ENCODE measurements at regions of chr6 and their contacts with region 1.

Region 1: DNA sequence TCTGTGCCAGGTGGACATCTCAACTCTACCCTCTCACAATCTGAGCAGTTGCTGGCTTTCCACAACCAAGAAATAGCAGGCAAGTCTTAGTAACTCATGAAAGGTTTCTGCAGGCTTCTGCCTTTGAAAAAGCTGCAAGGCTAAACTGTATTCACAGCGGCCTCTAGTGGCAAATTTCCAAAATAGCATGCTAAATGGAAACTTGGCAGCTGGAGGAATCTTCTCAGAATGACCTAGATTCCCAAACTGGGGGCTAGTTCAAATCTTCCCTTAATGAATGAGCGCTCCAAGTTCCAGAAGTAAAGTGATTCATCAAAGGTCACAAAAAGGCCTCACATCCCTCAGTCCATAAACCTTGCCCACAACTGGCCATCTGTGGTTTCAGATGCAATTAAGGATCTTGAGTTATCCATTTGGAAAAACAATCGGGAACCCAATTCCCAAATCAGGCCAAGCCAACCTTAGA is 11.9 kb upstream of the CPNE5 start:
- DNase-seq: peak in 4 of 5 donors; percentile 37 to 49 (median 46)
- H3K4me3 ChIP-seq: no peak overlapping the region
- H3K4me3 Mint-ChIP-seq: no peak overlapping the region
- H3K27ac ChIP-seq: no peak overlapping the region
- H3K27ac Mint-ChIP-seq: no peak overlapping the region
- H3K4me1 ChIP-seq: no peaks in the 10 kb centered on the region
- H3K4me1 Mint-ChIP-seq: no peaks in the 10 kb centered on the region
- H3K27me3 ChIP-seq: no peaks in the 10 kb centered on the region
- H3K27me3 Mint-ChIP-seq: no peaks in the 10 kb centered on the region

Region 2: DNA sequence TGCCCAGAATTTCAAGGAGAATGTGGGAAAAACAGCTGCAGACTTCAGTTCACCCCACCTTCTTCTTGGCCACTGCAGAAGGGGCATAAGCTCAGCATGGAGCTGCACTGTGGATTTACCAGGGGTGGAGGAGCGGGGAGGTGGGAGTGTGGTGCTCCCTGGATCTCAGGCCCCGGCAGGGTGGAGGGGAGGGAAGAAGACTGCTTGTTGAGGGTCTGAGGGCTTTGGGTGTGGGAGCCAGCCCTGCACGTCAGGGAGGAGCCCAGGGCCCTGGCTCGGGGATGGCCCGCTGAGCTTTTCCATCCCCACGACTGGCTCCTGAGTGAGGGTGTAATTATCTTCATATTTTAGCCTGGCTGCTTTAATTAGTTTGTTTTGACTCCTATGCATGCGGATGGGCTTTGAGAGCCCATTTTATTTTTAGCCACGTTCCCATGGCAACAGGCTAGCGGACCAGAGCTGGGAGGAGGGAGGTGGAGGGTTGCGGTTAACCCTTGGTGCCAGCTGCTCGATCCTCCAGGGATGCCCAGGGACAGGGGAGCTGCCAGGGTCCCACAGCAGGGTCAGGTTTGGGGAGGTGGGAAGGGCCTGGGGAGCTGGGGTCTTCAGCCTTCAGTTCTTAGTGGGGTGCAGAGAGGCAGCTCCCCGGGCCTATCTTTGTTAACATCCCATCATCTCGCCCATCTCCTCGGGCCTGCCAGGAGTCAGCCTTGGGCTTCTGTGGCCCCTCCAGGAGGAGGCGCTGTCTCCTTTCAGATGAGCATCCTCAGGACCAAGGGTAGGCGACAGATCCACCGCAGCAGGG is 85.4 kb before region 1 on chr6:
- CTCF ChIA-PET with region 1: interaction called, 47 read pairs
- POLR2A ChIA-PET with region 1: no interaction called
- intact Hi-C with region 1: loop called (anchors 1 kb)
- DNase-seq: peak; percentile 75 to 80 (median 78)
- H3K4me3 ChIP-seq: no peak overlapping the region
- H3K4me3 Mint-ChIP-seq: peak overlapping the region in 2 of 8 donors; percentile 11 to 28
- H3K27ac ChIP-seq: no peak overlapping the region
- H3K27ac Mint-ChIP-seq: peak overlapping the region in 5 of 7 donors; percentile 11 to 66 (median 50)
- H3K4me1 ChIP-seq: peaks cover 45% of the 10 kb centered on the region
- H3K4me1 Mint-ChIP-seq: peaks cover 27 to 37% (median 31%) of the 10 kb centered on the region in 4 donors
- H3K27me3 ChIP-seq: no peaks in the 10 kb centered on the region
- H3K27me3 Mint-ChIP-seq: no peaks in the 10 kb centered on the region

Region 3: DNA sequence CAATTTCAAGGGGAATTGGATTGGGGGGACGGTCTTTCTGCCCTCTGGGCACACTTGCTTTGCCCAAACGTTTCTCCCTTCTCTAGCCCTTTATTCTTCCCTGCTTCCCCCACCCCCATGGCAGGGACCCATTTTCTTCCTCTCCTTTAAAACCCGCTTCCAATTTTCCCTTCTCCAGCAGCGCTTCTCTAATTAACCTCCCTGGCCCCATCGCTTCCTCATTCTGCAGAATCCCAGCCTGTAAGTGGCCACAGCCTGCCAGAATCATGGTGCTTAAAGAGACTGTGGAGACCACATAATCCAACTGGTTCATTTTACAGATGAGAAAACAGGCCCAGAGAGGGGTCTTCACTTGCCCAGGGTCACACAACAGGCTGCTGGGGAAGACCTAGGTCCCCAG is 73.4 kb before region 1 on chr6:
- CTCF ChIA-PET with region 1: no interaction called
- POLR2A ChIA-PET with region 1: no interaction called
- intact Hi-C with region 1: no loop called
- DNase-seq: no peak
- H3K4me3 ChIP-seq: no peak overlapping the region
- H3K4me3 Mint-ChIP-seq: no peak overlapping the region
- H3K27ac ChIP-seq: no peak overlapping the region
- H3K27ac Mint-ChIP-seq: peak overlapping the region in 1 of 7 donors; percentile 40
- H3K4me1 ChIP-seq: no peaks in the 10 kb centered on the region
- H3K4me1 Mint-ChIP-seq: peaks cover 0 to 6% (median 3%) of the 10 kb centered on the region in 4 donors
- H3K27me3 ChIP-seq: no peaks in the 10 kb centered on the region
- H3K27me3 Mint-ChIP-seq: no peaks in the 10 kb centered on the region

Region 4: GRCh38 chr6:36840432-36841403 is 10.5 kb before region 1 on chr6:
- CTCF ChIA-PET with region 1: interaction called, 13 read pairs
- POLR2A ChIA-PET with region 1: no interaction called
- intact Hi-C with region 1: no loop called
- DNase-seq: peak; percentile 8 to 59 (median 25)
- H3K4me3 ChIP-seq: peak overlapping the region in 1 of 2 donors; percentile 19
- H3K4me3 Mint-ChIP-seq: peak overlapping the region; percentile 55 to 84 (median 81)
- H3K27ac ChIP-seq: no peak overlapping the region
- H3K27ac Mint-ChIP-seq: peak overlapping the region in 2 of 7 donors; percentile 25 to 63
- H3K4me1 ChIP-seq: peaks cover 20% of the 10 kb centered on the region
- H3K4me1 Mint-ChIP-seq: peaks cover 3 to 15% (median 9%) of the 10 kb centered on the region in 4 donors
- H3K27me3 ChIP-seq: peaks cover 18% of the 10 kb centered on the region
- H3K27me3 Mint-ChIP-seq: peaks cover 4 to 19% of the 10 kb centered on the region in 2 donors

Region 5: DNA sequence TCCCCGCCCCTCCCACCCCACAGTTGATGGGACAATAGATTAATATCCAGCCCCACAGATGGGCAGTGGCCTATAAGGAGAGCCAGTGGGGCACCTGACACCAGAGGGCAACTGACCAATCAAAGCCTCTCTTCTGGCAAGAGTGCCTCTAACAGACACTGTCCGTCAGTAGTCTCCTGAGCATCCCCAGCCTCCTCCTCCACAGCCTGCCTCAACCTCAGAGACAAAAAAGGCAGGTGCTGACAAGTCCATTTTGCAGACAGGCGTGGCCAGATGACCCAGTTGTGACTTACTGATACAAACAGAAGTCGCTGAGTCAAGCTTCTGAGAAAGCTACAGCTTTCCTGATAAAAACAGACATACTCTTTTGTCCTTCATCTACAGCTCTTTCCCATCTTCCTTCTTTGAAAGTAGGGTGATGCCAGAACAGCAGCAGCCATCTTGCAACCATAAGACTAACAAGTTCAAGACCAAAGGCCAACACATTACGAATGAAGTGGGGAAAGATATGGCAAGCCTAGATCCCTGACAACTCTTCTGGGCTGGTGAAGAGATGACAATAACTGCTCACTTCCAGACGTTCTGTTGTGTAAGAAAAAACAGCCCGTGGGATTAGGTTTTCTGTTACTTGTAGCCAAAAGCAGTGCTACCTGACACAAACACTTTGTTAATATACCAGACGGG is 11.1 kb after region 1 on chr6:
- CTCF ChIA-PET with region 1: interaction called, 20 read pairs
- POLR2A ChIA-PET with region 1: no interaction called
- intact Hi-C with region 1: no loop called
- DNase-seq: no peak
- H3K4me3 ChIP-seq: no peak overlapping the region
- H3K4me3 Mint-ChIP-seq: no peak overlapping the region
- H3K27ac ChIP-seq: no peak overlapping the region
- H3K27ac Mint-ChIP-seq: peak overlapping the region in 3 of 7 donors; percentile 6 to 53 (median 25)
- H3K4me1 ChIP-seq: peaks cover 16% of the 10 kb centered on the region
- H3K4me1 Mint-ChIP-seq: peaks cover 20 to 43% (median 25%) of the 10 kb centered on the region in 4 donors
- H3K27me3 ChIP-seq: no peaks in the 10 kb centered on the region
- H3K27me3 Mint-ChIP-seq: no peaks in the 10 kb centered on the region

Measured in CD4-positive, alpha-beta memory T cell (primary cell).